ENCODE measurements at regions of chr6 and their contacts with region 1.

Region 1: DNA sequence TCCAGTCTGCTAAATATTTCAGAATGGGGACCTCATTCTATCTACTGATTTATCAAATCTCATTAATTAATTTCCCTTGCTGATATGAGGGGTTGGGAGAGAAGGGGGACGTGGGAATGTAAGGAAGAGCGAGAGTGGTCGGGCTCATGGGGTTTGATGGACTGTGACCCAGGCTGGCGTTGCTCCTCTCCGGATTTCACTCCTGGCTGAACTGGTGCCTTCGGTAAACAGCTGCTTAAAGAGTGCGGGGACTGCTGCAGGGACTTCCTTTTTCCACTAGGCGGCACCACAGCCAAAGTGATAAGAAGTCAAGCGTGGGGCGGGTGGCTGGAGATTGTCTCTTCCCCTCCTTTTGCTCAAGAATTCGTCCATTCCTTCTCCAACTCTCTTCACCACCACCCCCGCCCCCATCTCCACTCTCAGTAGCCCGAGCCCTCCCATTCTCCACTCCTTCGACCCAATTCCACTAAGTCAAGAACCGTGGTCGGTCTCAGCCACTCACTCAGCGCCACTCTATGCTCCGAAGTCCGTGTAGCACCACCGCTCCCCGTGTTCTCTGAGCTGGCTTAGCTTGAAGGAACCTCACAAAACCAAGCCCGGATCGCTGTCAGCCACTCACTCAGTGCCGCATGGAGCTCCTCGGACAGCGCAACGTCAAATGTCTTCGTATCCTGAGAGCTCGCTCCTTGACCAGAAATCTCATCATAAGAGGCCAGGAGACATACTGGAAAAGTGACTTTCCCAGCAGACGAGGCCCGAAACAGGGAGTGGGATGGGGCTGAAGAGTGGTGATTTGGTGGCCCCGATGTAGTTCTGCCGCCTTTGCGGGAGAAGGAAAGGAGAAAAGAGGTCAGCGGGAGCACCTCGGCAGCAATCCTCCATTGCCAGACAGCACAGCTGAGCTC is 9.7 kb downstream of the TRIM31 start:
- DNase-seq: peak; percentile 78 to 86 (median 85)
- ATAC-seq: peak; percentile 68 to 81 (median 80)
- H3K4me3 ChIP-seq: peak overlapping the region in 11 of 12 donors; percentile 21 to 60 (median 46)
- H3K27ac ChIP-seq: peak overlapping the region in 11 of 12 donors; percentile 21 to 81 (median 62)
- H3K4me1 ChIP-seq: peaks cover 0 to 38% (median 28%) of the 10 kb centered on the region in 12 donors
- H3K27me3 ChIP-seq: peaks cover 0 to 49% (median 29%) of the 10 kb centered on the region in 9 donors
- CTCF ChIP-seq: peak; percentile 71 to 94 (median 90)
- POLR2A ChIP-seq: peak in 1 of 2 donors; percentile 24

Region 2: DNA sequence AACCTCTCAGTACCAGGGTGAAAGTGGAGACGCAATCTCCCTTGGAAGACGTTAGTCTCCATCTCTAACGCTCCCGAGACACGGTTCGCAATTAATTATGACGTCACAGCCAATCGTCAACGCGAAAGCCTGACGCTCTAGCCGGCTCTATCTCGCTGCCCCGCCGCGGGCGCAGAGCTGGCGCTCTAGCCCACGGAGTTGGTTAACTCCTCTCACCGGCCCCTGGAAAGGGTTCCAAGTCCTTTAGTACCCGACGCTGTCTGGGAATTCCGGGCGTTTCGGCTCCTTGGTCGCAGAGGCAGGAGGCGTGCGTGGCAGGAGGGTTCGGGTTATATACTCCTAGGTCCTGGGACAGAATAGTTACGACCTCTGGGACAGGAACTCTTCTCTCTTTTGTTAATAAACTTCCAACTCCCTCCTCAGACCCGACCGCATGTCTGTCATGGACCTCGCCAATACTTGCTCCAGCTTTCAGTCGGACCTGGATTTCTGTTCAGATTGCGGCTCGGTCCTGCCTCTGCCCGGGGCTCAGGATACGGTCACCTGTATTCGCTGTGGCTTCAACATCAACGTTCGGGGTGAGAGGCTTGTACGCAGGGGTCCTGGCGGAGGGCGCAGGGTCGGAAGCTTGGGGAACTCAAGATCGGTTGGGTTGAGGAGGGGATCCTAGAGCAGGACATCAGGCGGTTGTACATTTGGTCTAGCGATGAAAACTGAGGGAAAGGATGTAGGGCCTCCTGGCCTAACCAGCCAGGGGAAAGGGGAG is 41.9 kb before region 1 on chr6 and contains the start of gene POLR1H:
- intact Hi-C with region 1: loop called in 8 of 10 experiments (anchors 2 to 5 kb)
- DNase-seq: peak; percentile 93 to 96 (median 94)
- ATAC-seq: peak; percentile 97 to 99 (median 98)
- H3K4me3 ChIP-seq: peak within 1 kb of the TSS; percentile 61 to 93 (median 73)
- H3K27ac ChIP-seq: peak within 1 kb of the TSS; percentile 57 to 93 (median 88)
- H3K4me1 ChIP-seq: peaks cover 3 to 42% (median 27%) of the 10 kb centered on the region in 12 donors
- H3K27me3 ChIP-seq: no peaks in the 10 kb centered on the region
- CTCF ChIP-seq: peak in 3 of 12 donors; percentile 8 to 13 (median 13)
- POLR2A ChIP-seq: peak; percentile 33 to 80
- total RNA-seq, gene POLR1H: 11.7 to 19.8 (median 14.7) TPM

Region 3: DNA sequence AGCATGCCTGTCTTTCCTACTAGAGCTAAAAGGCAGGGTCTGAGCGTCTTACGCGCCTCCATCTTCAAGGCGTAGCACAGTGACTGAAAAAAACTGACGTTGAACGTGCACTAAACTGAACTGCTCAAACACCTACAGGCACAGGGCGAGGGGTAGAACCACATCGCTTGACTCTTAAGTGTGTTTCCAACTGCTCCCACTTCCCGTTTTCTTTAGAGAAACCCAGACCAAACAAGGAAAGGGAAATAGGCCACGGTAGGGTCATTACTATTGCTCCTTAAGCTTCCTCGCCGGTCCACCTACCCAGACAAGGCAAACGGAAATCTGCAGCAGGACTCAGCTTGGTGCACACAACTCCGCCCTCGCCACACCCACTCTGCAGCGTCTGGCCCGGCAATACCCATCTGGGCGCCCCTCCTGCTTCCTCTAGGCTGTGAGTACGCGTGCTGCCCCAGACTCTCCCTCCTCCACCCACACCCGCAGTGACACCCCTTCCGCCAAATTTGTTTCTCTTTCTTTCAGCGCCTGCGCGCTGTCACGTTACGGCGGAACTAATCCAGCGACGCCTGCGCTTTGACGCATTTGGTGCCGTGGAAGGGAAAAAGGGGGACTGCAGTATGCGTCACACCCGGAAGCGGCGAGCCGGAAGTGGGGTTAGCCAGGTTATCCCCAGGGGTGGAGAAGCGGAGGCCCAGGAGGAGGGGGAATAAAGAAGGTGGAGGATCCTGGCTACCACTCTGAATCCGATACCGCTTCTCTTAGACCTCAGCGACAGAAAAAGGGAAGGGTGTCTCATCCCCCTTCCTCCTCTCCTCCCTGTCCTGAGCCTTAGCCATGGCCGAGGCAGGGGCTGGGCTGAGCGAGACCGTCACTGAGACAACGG is 36.4 kb before region 1 on chr6 and contains the start of gene PPP1R11:
- intact Hi-C with region 1: loop called in 8 of 10 experiments (anchors 2 to 5 kb)
- DNase-seq: peak; percentile 98 to 99 (median 99)
- ATAC-seq: peak; percentile 99
- H3K4me3 ChIP-seq: peak within 1 kb of the TSS; percentile 51 to 86 (median 74)
- H3K27ac ChIP-seq: peak within 1 kb of the TSS; percentile 80 to 95 (median 91)
- H3K4me1 ChIP-seq: peaks cover 0 to 46% (median 30%) of the 10 kb centered on the region in 12 donors
- H3K27me3 ChIP-seq: peaks cover 0 to 14% (median 8%) of the 10 kb centered on the region in 9 donors
- CTCF ChIP-seq: peak in 1 of 12 donors; percentile 6
- POLR2A ChIP-seq: peak in 1 of 2 donors; percentile 78
- total RNA-seq, gene PPP1R11: 41.6 to 64.7 (median 44.9) TPM

Region 4: DNA sequence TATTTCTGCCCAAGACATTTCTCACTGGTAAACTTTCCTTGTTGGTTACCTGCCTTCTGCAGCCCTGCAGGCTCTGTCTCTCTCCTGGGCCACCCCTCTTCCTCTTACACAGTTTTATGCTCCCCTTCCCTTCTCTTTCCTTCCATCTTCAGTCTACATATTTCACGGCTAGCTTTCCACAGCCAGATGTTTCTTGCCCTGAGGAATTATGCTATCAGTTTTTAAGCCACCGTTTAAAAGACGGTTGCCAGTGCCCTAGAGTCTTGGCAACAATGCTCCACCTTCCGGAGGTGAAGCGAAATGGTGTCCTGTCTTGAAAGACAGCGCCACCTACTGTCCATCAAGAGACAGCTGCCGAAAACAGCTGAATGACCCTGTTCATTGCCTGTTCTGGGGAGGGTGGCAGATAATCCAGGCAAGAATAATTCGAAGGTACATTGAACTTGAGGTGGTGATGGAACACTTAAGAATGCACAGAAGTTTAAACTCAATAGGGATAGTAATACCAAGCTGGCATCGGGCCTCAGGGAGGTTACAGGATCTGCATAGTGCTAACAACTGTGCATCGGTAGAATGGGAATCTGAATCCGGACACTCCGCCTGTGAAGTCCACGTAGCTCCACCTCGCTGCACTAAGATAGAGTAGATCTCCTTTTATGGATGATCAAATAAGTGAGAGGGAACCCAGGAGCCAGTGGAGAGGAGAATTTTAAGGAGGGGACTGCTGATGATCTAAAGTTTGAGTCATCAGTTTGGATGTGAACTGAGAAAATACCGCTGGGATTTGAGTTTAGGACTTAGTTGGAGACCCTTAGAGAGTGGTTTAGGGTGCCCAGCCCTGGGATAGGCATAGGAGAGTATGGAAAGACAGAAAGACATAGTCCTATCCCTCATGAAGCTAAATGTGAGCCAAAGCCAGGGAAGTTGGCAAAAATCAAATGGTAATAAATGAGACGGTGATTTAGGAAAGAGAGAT is 28.0 kb after region 1 on chr6:
- intact Hi-C with region 1: loop called (anchors 1 to 2 kb)
- DNase-seq: peak in 4 of 5 donors; percentile 56 to 66 (median 64)
- ATAC-seq: peak in 3 of 4 donors; percentile 90 to 93 (median 91)
- H3K4me3 ChIP-seq: no peak overlapping the region
- H3K27ac ChIP-seq: no peak overlapping the region
- H3K4me1 ChIP-seq: peaks cover 0 to 17% (median 4%) of the 10 kb centered on the region in 12 donors
- H3K27me3 ChIP-seq: peaks cover 21 to 92% (median 46%) of the 10 kb centered on the region in 9 donors
- CTCF ChIP-seq: peak; percentile 84 to 99 (median 96)
- POLR2A ChIP-seq: no peak

Region 5: GRCh38 chr6:30169658-30170614 is 66.7 kb after region 1 on chr6:
- intact Hi-C with region 1: loop called in 4 of 10 experiments (anchors 2 to 5 kb)
- DNase-seq: no peak
- ATAC-seq: peak in 3 of 4 donors; percentile 66 to 71 (median 68)
- H3K4me3 ChIP-seq: no peak overlapping the region
- H3K27ac ChIP-seq: no peak overlapping the region
- H3K4me1 ChIP-seq: peaks cover 0 to 9% (median 0%) of the 10 kb centered on the region in 12 donors
- H3K27me3 ChIP-seq: peaks cover 10 to 81% (median 41%) of the 10 kb centered on the region in 9 donors
- CTCF ChIP-seq: peak; percentile 54 to 79 (median 68)
- POLR2A ChIP-seq: no peak

Measured in heart left ventricle (tissue), 16 donors.